A549 (cell line): ENCODE measurements at regions of chr10 and their contacts with region 1.

Region 1: GRCh38 chr10:29535012-29535777 is 99.6 kb downstream of the SVIL start:
- DNase-seq: peak; percentile 80 to 84
- ATAC-seq: peak; percentile 91 to 95
- H3K4me3 ChIP-seq: peak overlapping the region; percentile 20; the same call in 2 of the 3 replicates
- H3K27ac ChIP-seq: peak overlapping the region; percentile 67 to 82
- H3K4me1 ChIP-seq: peaks cover 32% of the 10 kb centered on the region
- CTCF ChIP-seq: peak; percentile 76
- EP300 ChIP-seq: no peak
- POLR2A ChIP-seq: no peak
- RAD21 ChIP-seq: peak; percentile 23 to 46; a peak in 2 of 5 replicates

Region 2: DNA sequence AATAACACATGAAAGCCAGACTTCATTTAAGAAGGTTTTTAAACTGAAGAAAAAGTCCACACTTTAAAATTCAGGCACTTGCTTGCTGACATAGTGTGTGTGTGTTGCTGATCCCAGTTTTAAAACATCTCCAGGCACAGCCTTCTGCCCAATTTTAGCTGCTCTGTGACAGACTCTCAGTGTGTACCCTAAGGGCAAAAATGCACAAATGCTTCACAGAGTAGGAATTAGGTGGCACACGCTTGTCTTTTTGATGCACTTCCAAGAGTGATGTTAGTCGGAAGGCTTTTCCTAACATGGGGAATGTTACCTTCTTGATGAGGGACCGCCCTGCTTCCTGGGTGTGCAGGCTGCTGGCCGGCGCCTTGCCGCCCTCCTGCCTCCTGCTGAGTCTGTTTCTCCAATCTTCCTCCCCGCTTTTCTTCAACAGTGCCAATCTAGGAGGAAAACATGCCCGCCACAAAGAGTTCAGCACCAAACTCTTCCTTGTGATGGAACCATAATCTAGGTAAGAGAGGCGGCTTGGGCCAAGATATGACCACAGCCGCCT is 22.7 kb before region 1 on chr10:
- CTCF ChIA-PET with region 1: interaction called, 16 read pairs
- POLR2A ChIA-PET with region 1: no interaction called
- DNase-seq: no peak
- ATAC-seq: no peak
- H3K4me3 ChIP-seq: no peak overlapping the region
- H3K27ac ChIP-seq: no peak overlapping the region
- H3K4me1 ChIP-seq: no peaks in the 10 kb centered on the region
- CTCF ChIP-seq: no peak
- EP300 ChIP-seq: no peak
- POLR2A ChIP-seq: no peak
- RAD21 ChIP-seq: no peak

Region 3: DNA sequence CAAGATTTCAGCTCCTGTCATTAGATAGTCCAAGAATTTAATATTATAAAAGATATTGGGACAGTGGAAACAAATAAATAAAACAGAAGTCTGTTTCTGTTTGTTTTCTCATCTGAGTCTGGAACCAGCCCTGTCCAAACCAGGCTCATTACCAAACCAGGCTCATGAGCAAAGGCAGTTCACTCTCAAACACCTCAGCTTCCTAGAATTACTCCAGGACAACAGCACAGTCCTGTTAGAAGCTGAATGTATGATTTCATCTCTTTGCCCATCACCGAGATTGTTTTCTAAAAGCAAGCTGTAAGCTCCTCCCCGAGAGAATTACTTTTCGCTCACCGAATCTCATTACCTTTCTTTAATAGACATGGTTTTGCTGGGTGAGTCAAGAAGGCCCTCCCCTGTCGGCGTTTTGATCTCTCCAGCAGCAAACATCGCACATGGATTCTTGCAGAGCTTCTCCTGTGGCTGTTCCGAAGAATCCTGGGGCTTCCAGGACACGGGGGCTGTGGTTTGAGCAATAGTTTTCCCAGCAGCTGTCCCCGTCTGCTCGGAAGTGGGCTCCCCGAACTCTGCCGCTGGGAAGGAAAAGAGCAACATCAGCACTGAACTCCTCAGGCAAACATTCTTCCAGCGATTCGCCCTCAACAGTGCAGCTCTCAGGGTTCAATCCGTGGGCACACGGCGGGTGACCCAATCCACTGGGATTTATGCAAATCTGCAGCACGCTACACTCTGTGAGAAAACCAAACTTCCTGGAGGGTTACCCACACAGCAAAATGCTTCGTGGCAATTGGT is 12.9 kb before region 1 on chr10:
- CTCF ChIA-PET with region 1: interaction called, 22 read pairs
- POLR2A ChIA-PET with region 1: no interaction called
- DNase-seq: no peak
- ATAC-seq: no peak
- H3K4me3 ChIP-seq: no peak overlapping the region
- H3K27ac ChIP-seq: no peak overlapping the region
- H3K4me1 ChIP-seq: no peaks in the 10 kb centered on the region
- CTCF ChIP-seq: no peak
- EP300 ChIP-seq: no peak
- POLR2A ChIP-seq: no peak
- RAD21 ChIP-seq: no peak